ENCODE measurements at regions of chr5 and their contacts with region 1.

Region 1: DNA sequence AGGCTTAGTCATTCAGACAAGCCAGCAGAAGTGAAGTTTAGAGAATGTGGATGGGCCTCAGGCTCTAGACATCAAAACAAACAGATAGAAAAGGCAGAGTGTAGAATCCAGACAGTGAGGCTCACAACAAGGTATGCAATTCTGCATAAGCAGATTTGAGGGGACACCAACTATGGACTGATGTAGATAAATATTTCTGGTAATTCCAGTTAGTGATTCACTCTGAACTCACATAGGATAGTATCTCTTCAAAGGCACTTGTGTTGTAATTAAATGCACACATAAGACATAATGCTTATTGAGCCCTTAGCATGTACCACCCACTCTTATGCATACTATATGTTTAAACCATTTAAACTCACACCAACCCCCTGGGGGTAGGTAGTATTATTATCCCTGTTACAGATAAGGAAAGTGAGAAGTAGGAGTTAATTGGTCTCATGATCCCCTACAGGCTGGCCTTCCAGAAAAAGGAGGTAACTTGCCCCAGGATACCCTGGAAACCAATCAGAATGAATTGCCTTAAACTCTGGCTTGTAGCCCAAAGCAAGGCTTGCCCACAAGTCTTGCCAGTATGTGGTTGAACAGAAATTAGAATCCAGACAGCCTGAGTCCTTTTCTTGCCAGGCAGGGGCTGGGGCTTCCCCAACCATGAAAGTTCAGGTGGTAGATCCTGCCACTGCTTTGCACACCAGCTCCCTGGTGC is 39.5 kb upstream of the HSPB3 start:
- DNase-seq: no peak
- H3K4me3 ChIP-seq: no peak overlapping the region
- H3K27ac ChIP-seq: no peak overlapping the region
- H3K4me1 ChIP-seq: peaks cover 8% of the 10 kb centered on the region
- H3K27me3 ChIP-seq: no peaks in the 10 kb centered on the region
- CTCF ChIP-seq: no peak

Region 2: GRCh38 chr5:54249210-54250028 is 166.6 kb before region 1 on chr5:
- intact Hi-C with region 1: loop called (anchors 5 kb)
- DNase-seq: peak; percentile 21
- H3K4me3 ChIP-seq: no peak overlapping the region
- H3K27ac ChIP-seq: no peak overlapping the region
- H3K4me1 ChIP-seq: peaks cover 61% of the 10 kb centered on the region
- H3K27me3 ChIP-seq: no peaks in the 10 kb centered on the region
- CTCF ChIP-seq: no peak

Region 3: GRCh38 chr5:54310433-54311175 is 105.4 kb before region 1 on chr5 and contains the start of gene ARL15:
- intact Hi-C with region 1: loop called (anchors 5 kb)
- DNase-seq: peak; percentile 99
- H3K4me3 ChIP-seq: peak within 1 kb of the TSS; percentile 91
- H3K27ac ChIP-seq: peak within 1 kb of the TSS; percentile 91
- H3K4me1 ChIP-seq: peaks cover 48% of the 10 kb centered on the region
- H3K27me3 ChIP-seq: no peaks in the 10 kb centered on the region
- CTCF ChIP-seq: no peak
- total RNA-seq, gene ARL15: 18.2 TPM

Region 4: GRCh38 chr5:54563083-54563786 is 147.2 kb after region 1 on chr5:
- intact Hi-C with region 1: no loop called
- DNase-seq: no peak
- H3K4me3 ChIP-seq: no peak overlapping the region
- H3K27ac ChIP-seq: no peak overlapping the region
- H3K4me1 ChIP-seq: peaks cover under 1% of the 10 kb centered on the region
- H3K27me3 ChIP-seq: no peaks in the 10 kb centered on the region
- CTCF ChIP-seq: no peak